ENCODE measurements at regions of chrX and their contacts with region 1.

Region 1: GRCh38 chrX:120769576-120770341 is 105.9 kb downstream of the CT47B1 start:
- DNase-seq: peak in 1 of 4 experiments; percentile 10
- ATAC-seq: no peak
- H3K4me3 ChIP-seq: no peak overlapping the region
- H3K27ac ChIP-seq: no peak overlapping the region
- H3K4me1 ChIP-seq: no peaks in the 10 kb centered on the region
- H3K27me3 ChIP-seq: no peaks in the 10 kb centered on the region; a peak in 1 of 5 replicates
- CTCF ChIP-seq: peak in 2 of 3 experiments; percentile 11 to 48; a peak in 3 of 6 replicates
- EP300 ChIP-seq: no peak
- POLR2A ChIP-seq: no peak
- RAD21 ChIP-seq: peak; percentile 44 to 58; a peak in 3 of 4 replicates

Region 2: GRCh38 chrX:120499301-120500072 is 270.3 kb before region 1 on chrX:
- CTCF ChIA-PET with region 1: no interaction called
- POLR2A ChIA-PET with region 1: no interaction called
- in situ Hi-C with region 1: no loop called
- intact Hi-C with region 1: loop called (anchors 5 kb)
- DNase-seq: no peak
- ATAC-seq: no peak
- H3K4me3 ChIP-seq: no peak overlapping the region
- H3K27ac ChIP-seq: no peak overlapping the region
- H3K4me1 ChIP-seq: no peaks in the 10 kb centered on the region; a peak in 1 of 5 replicates
- H3K27me3 ChIP-seq: no peaks in the 10 kb centered on the region
- CTCF ChIP-seq: no peak
- EP300 ChIP-seq: no peak
- POLR2A ChIP-seq: no peak
- RAD21 ChIP-seq: no peak

Region 3: GRCh38 chrX:120514236-120514635 is 255.5 kb before region 1 on chrX:
- CTCF ChIA-PET with region 1: no interaction called
- POLR2A ChIA-PET with region 1: interaction called, 3 read pairs
- in situ Hi-C with region 1: no loop called
- intact Hi-C with region 1: loop called (anchors 5 kb)
- DNase-seq: peak in 3 of 4 experiments; percentile 5 to 41 (median 23)
- ATAC-seq: peak; percentile 89
- H3K4me3 ChIP-seq: no peak overlapping the region
- H3K27ac ChIP-seq: no peak overlapping the region
- H3K4me1 ChIP-seq: no peaks in the 10 kb centered on the region; a peak in 1 of 5 replicates
- H3K27me3 ChIP-seq: no peaks in the 10 kb centered on the region
- CTCF ChIP-seq: peak; percentile 49 to 64 (median 50); a peak in 4 of 6 replicates
- EP300 ChIP-seq: no peak
- POLR2A ChIP-seq: no peak
- RAD21 ChIP-seq: peak; percentile 25 to 61

Region 4: DNA sequence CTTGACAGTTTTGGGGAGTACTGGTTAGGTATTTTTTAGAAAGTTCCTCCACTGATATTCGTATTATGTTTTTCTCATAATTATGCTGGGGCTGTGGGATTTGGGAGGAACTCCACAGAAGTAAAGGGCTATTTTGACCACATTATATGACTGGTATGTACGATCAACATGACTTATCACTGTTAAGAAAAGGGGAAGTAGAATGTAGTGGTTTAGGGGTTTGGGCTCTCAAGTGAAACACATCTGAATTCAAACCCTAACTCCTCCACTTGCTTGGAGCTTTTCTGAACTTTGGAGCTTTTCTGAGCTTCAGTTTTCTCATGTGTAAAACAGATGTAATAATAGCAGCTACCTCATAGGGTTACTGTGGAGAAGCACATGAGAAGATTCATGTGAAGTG is 43.5 kb before region 1 on chrX:
- CTCF ChIA-PET with region 1: no interaction called
- POLR2A ChIA-PET with region 1: no interaction called
- in situ Hi-C with region 1: no loop called
- intact Hi-C with region 1: no loop called
- DNase-seq: no peak
- ATAC-seq: no peak
- H3K4me3 ChIP-seq: no peak overlapping the region
- H3K27ac ChIP-seq: no peak overlapping the region
- H3K4me1 ChIP-seq: no peaks in the 10 kb centered on the region
- H3K27me3 ChIP-seq: no peaks in the 10 kb centered on the region
- CTCF ChIP-seq: no peak
- EP300 ChIP-seq: no peak
- POLR2A ChIP-seq: no peak
- RAD21 ChIP-seq: no peak